ENCODE measurements at regions of chr5 and their contacts with region 1.

Region 1: GRCh38 chr5:16456103-16456832 is 9.3 kb downstream of the ZNF622 start:
- DNase-seq: peak; percentile 74
- ATAC-seq: peak; percentile 51
- H3K4me3 ChIP-seq: no peak overlapping the region
- H3K4me3 Mint-ChIP-seq: peak overlapping the region; percentile 61
- H3K27ac ChIP-seq: peak overlapping the region in 1 of 2 donors; percentile 57
- H3K27ac Mint-ChIP-seq: peak overlapping the region; percentile 70
- H3K4me1 ChIP-seq: peaks cover 10 to 12% of the 10 kb centered on the region in 2 donors
- H3K4me1 Mint-ChIP-seq: peaks cover 49% of the 10 kb centered on the region
- H3K27me3 ChIP-seq: no peaks in the 10 kb centered on the region
- H3K27me3 Mint-ChIP-seq: no peaks in the 10 kb centered on the region
- CTCF ChIP-seq: peak; percentile 83

Region 2: GRCh38 chr5:15105796-15106393 is 1350.4 kb before region 1 on chr5:
- CTCF ChIA-PET with region 1: interaction called, 8 read pairs
- POLR2A ChIA-PET with region 1: no interaction called
- intact Hi-C with region 1: loop called (anchors 5 kb)
- DNase-seq: peak; percentile 30
- ATAC-seq: no peak
- H3K4me3 ChIP-seq: no peak overlapping the region
- H3K4me3 Mint-ChIP-seq: no peak overlapping the region
- H3K27ac ChIP-seq: no peak overlapping the region
- H3K27ac Mint-ChIP-seq: no peak overlapping the region
- H3K4me1 ChIP-seq: no peaks in the 10 kb centered on the region
- H3K4me1 Mint-ChIP-seq: no peaks in the 10 kb centered on the region
- H3K27me3 ChIP-seq: no peaks in the 10 kb centered on the region
- H3K27me3 Mint-ChIP-seq: peaks cover 8% of the 10 kb centered on the region
- CTCF ChIP-seq: peak; percentile 78

Region 3: GRCh38 chr5:16160706-16161105 is 295.6 kb before region 1 on chr5:
- CTCF ChIA-PET with region 1: interaction called, 12 read pairs
- POLR2A ChIA-PET with region 1: no interaction called
- intact Hi-C with region 1: no loop called
- DNase-seq: peak; percentile 3
- ATAC-seq: no peak
- H3K4me3 ChIP-seq: no peak overlapping the region
- H3K4me3 Mint-ChIP-seq: no peak overlapping the region
- H3K27ac ChIP-seq: no peak overlapping the region
- H3K27ac Mint-ChIP-seq: no peak overlapping the region
- H3K4me1 ChIP-seq: no peaks in the 10 kb centered on the region
- H3K4me1 Mint-ChIP-seq: no peaks in the 10 kb centered on the region
- H3K27me3 ChIP-seq: no peaks in the 10 kb centered on the region
- H3K27me3 Mint-ChIP-seq: no peaks in the 10 kb centered on the region
- CTCF ChIP-seq: no peak

Region 4: DNA sequence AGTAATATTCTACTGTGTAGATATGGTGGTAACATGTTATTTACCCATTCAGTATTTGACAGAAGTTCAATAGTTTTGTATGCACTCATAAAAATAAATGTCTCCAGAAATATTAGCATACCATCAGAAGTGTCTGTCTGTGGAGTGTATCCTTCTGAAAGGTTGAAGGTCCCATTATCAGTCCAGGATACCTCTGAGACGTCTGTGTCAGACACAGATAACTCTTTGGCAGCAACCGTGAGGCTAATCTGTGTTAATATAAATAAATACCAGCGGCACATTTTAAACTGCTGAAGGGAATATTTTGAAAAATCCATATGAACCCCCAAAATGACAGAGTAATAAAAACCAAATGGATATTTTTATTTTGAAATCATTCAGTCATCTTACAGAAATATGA is 21.3 kb after region 1 on chr5:
- CTCF ChIA-PET with region 1: interaction called, 10 read pairs
- POLR2A ChIA-PET with region 1: no interaction called
- intact Hi-C with region 1: no loop called
- DNase-seq: no peak
- ATAC-seq: no peak
- H3K4me3 ChIP-seq: no peak overlapping the region
- H3K4me3 Mint-ChIP-seq: no peak overlapping the region
- H3K27ac ChIP-seq: no peak overlapping the region
- H3K27ac Mint-ChIP-seq: no peak overlapping the region
- H3K4me1 ChIP-seq: no peaks in the 10 kb centered on the region
- H3K4me1 Mint-ChIP-seq: no peaks in the 10 kb centered on the region
- H3K27me3 ChIP-seq: no peaks in the 10 kb centered on the region
- H3K27me3 Mint-ChIP-seq: peaks cover 8% of the 10 kb centered on the region
- CTCF ChIP-seq: no peak

Region 5: DNA sequence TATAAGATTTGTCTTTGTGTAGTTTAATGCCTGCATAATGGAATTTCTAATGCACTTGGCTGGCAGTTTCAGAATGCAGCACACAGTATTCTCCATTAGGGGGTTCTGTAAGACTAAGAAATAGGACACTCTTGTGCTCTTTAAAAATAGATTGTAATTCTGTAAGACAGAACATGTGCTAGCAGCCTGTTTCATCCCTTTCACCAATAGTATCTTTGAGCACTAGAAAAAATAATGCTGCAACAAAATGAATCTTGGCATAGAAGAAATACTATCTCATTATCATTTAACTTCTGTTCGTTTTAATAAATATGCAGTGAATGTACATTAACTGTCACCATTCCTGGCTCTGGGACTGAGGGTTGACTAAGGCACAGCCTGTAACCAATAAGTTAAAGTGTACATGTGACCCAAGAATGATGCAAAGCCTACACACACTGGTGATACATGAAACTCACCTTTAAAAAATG is 33.1 kb after region 1 on chr5:
- CTCF ChIA-PET with region 1: interaction called, 11 read pairs
- POLR2A ChIA-PET with region 1: no interaction called
- intact Hi-C with region 1: no loop called
- DNase-seq: peak; percentile 25
- ATAC-seq: peak; percentile 43
- H3K4me3 ChIP-seq: no peak overlapping the region
- H3K4me3 Mint-ChIP-seq: no peak overlapping the region
- H3K27ac ChIP-seq: no peak overlapping the region
- H3K27ac Mint-ChIP-seq: no peak overlapping the region
- H3K4me1 ChIP-seq: no peaks in the 10 kb centered on the region
- H3K4me1 Mint-ChIP-seq: no peaks in the 10 kb centered on the region
- H3K27me3 ChIP-seq: no peaks in the 10 kb centered on the region
- H3K27me3 Mint-ChIP-seq: no peaks in the 10 kb centered on the region
- CTCF ChIP-seq: peak; percentile 65

Region 6: DNA sequence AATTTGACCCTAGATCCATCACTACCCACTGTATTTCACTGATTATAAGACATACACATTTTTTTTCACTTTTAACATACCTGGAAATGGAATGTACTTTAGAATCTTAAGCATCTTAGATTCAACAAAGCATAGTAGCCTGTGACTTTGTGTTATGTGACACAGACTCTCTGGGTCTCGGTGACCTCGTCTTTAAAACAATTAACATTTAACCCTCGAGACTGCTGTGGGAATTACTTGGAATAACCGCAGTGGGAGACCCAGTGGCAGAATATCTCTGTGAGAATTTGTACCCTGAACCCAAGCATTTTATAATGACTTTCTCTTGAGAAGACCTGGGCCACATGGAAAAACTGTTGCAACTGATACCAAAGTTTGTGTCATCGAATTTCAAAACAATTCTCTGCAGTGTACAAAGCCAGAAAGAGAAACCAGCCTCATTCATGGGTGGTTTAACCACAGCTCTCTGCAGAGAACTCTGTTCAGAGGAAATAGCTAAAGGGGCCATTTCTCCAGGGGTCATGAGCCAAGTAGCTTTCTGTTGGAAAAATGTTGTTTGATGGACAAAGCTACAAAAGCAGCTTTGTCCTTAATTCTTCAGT is 170.5 kb after region 1 on chr5:
- CTCF ChIA-PET with region 1: no interaction called
- POLR2A ChIA-PET with region 1: no interaction called
- intact Hi-C with region 1: no loop called
- DNase-seq: no peak
- ATAC-seq: no peak
- H3K4me3 ChIP-seq: no peak overlapping the region
- H3K4me3 Mint-ChIP-seq: no peak overlapping the region
- H3K27ac ChIP-seq: no peak overlapping the region
- H3K27ac Mint-ChIP-seq: no peak overlapping the region
- H3K4me1 ChIP-seq: peaks cover 13 to 20% of the 10 kb centered on the region in 2 donors
- H3K4me1 Mint-ChIP-seq: peaks cover 12% of the 10 kb centered on the region
- H3K27me3 ChIP-seq: peaks cover 0 to 2% (median 0%) of the 10 kb centered on the region in 4 experiments
- H3K27me3 Mint-ChIP-seq: peaks cover 11% of the 10 kb centered on the region
- CTCF ChIP-seq: no peak